ENCODE measurements at regions of chr9 and their contacts with region 1.

Region 1: GRCh38 chr9:112361601-112362000 is 18.3 kb upstream of the HSDL2 start:
- DNase-seq: no peak
- ATAC-seq: peak; percentile 49
- H3K4me3 Mint-ChIP-seq: no peak overlapping the region
- H3K27ac Mint-ChIP-seq: no peak overlapping the region
- H3K4me1 Mint-ChIP-seq: peaks cover 7% of the 10 kb centered on the region
- H3K27me3 Mint-ChIP-seq: peaks cover 6% of the 10 kb centered on the region

Region 2: GRCh38 chr9:112086627-112087026 is 275.0 kb before region 1 on chr9:
- CTCF ChIA-PET with region 1: interaction called, 44 read pairs
- DNase-seq: no peak
- ATAC-seq: no peak
- H3K4me3 Mint-ChIP-seq: no peak overlapping the region
- H3K27ac Mint-ChIP-seq: no peak overlapping the region
- H3K4me1 Mint-ChIP-seq: peaks cover 6% of the 10 kb centered on the region
- H3K27me3 Mint-ChIP-seq: no peaks in the 10 kb centered on the region

Region 3: DNA sequence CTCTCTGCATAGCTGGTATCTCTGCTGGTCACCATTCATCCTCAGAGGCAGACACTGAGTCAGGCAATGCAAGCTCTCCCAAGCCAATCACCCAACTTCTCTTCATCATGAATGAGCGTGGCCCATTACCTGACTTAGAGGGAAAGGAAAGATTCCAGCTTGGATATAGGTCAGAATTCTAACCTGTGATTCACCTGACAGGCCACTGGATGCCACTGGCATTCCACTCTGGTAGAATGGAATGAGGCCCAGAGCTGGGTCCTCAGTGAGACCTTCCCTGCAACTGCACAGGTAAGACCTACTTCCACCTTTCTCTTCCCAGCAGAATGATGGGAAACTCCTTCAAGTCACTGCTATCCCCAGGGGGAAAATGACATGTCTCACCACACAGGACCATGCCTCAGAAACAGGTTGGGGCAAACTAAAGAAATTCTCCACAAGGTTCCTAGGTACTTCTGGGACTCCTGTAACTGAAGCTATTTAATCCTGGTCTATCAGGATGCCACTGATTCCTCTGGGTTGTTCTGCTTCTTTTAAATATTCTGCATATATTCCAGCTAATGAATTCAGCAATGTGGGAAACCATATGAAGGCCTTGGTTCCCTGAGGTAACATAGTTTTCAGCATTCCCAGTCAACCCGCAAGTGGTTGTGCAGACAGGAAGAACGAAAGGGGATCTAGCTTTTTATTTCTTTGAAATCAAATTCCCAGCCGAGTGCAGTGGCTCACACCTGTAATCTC is 248.5 kb before region 1 on chr9:
- CTCF ChIA-PET with region 1: interaction called, 11 read pairs
- DNase-seq: no peak
- ATAC-seq: peak; percentile 23
- H3K4me3 Mint-ChIP-seq: no peak overlapping the region
- H3K27ac Mint-ChIP-seq: no peak overlapping the region
- H3K4me1 Mint-ChIP-seq: peaks cover 3% of the 10 kb centered on the region
- H3K27me3 Mint-ChIP-seq: no peaks in the 10 kb centered on the region

Region 4: DNA sequence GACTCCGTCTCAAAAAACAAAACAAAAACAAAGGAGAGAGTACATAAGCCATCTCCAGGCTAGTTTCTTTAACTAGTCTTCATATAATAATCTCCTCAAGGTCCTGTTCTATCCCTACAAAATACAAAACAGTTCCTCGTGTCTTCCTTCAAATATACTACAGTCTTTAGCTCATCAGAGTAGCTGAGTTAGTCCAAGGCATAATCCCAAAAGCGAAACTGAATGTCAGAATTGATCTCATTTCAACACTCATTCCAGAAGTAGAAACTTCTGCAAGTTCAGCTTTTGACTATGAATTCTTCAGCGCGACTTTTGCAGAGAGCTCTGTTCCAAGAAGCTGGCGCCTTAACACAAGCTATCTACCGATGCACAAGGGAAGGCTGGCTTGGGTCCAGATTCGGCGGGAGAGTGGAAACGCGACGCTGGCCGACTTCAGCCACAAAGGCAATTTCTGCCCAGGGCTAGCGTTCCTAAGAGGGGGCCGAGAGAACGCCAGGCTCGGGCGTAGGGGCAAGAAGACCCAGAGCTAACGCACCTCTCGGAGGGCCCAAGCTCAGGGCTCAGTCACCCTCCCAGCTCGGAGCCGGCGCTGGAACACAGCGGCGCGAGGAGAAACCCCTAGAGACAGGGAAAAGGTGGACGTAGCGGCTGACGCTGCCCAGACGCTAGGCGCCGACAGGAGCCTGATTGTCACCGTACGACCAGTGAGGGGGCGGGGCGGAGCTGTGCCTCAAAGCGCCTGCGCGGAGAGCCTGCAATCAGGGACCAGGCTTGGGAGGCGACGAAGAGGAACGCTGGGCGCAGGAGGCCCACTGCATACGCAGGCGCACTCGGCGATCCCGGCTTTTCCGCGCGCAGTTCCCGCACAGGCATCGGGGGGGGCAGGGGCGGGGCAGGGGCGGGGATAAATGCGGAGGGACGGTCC is 17.8 kb after region 1 on chr9:
- CTCF ChIA-PET with region 1: interaction called, 18 read pairs
- DNase-seq: peak; percentile 99
- ATAC-seq: peak; percentile 93
- H3K4me3 Mint-ChIP-seq: peak overlapping the region; percentile 90
- H3K27ac Mint-ChIP-seq: peak overlapping the region; percentile 99
- H3K4me1 Mint-ChIP-seq: peaks cover 50% of the 10 kb centered on the region
- H3K27me3 Mint-ChIP-seq: no peaks in the 10 kb centered on the region

Measured in activated CD8-positive, alpha-beta memory T cell treated with anti-CD3 and anti-CD28 coated beads, Interleukin-2, amount 10 ng/mL, durations not matched to agents 7 days and 5 days (primary cell).